Common myeloid progenitor, CD34-positive (primary cell): ENCODE measurements at regions of chr15 and their contacts with region 1.

Region 1: GRCh38 chr15:99275525-99276128 is 24.3 kb downstream of the LRRC28 start:
- DNase-seq: no peak
- H3K4me3 ChIP-seq: no peak overlapping the region
- H3K27ac ChIP-seq: no peak overlapping the region
- H3K4me1 ChIP-seq: peaks cover 0 to 5% (median 3%) of the 10 kb centered on the region in 4 experiments
- H3K27me3 ChIP-seq: no peaks in the 10 kb centered on the region

Region 2: GRCh38 chr15:99253381-99254090 is 22.1 kb before region 1 on chr15:
- CTCF ChIA-PET with region 1: interaction called, 14 read pairs
- POLR2A ChIA-PET with region 1: no interaction called
- DNase-seq: no peak
- H3K4me3 ChIP-seq: no peak overlapping the region
- H3K27ac ChIP-seq: no peak overlapping the region
- H3K4me1 ChIP-seq: peaks cover 18 to 32% (median 27%) of the 10 kb centered on the region in 4 experiments
- H3K27me3 ChIP-seq: no peaks in the 10 kb centered on the region